ENCODE measurements at regions of chr12 and their contacts with region 1.

Region 1: DNA sequence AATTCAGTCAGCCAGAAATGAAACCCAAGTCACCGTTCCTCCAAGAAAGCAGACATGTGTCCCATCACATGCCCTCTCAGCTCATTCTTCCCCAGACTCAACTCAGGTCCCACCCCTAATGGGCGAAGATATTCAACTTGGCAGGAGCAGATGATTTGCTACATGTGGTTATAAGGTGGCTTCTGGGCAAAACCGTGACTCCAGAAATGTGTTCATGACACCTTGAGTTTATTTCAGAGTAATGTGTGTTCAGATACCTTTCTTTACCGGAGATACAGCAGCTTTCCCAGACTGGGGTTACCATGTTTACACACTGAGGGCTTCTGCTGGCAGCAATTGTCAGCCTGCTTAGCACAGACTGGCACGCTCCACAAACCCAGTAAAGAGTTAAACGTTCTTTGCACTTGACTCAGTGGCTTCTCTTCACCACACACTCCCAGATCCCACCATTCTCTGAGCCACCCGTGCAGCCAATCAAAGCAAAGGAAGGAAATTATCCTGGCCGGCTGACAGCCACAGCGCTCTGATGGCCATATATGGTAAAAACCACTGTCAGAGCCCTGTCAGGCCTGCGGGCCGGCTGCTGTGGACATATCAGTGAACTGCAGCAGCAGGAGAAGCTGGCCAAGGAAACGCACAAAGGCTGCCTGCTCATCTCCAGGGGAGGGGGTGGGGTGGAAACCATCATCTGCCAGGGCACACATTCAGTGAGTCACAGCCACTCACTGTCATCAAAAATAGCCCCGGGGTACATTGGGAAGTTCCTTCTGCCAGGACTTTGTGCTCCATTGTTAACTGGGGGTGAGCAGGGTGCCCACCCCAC is 39.9 kb downstream of the CORO1C start:
- DNase-seq: peak; percentile 98
- H3K4me3 ChIP-seq: peak overlapping the region; percentile 41
- CTCF ChIP-seq: peak; percentile 31

Region 2: DNA sequence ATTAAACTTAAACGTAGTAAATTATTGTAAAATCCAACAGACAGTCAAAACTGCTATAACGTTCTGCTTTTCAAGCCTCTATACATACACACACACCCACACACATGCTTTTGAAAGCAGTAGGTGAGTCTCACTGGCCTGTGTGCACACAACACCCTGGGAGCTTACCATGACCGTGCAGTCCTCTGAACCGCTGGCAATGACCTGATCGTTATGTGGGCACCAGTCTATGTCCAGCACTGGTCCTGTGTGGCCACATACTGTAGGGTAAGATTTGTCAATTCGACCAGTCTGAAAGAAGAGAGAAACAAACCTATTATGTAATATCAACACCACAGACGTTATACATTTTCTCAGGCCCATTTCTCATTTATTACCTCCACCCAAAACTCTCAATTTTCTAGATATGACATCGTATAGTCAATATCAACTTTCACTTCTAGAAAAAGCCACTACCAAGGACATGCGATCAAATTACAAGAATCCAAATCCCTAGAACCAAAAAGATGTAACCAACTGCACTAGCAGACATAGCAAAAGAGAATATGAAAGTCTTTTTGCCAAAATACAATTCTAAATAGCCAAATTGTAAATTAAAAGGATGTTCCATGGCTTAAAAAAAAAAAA is 13.2 kb before region 1 on chr12:
- CTCF ChIA-PET with region 1: interaction called, 11 read pairs
- POLR2A ChIA-PET with region 1: interaction called, 4 read pairs
- DNase-seq: no peak
- H3K4me3 ChIP-seq: no peak overlapping the region
- CTCF ChIP-seq: no peak

Region 3: GRCh38 chr12:108722992-108723766 is 31.8 kb after region 1 on chr12:
- CTCF ChIA-PET with region 1: interaction called, 5 read pairs
- POLR2A ChIA-PET with region 1: interaction called, 17 read pairs
- DNase-seq: peak; percentile 92
- H3K4me3 ChIP-seq: no peak overlapping the region
- CTCF ChIP-seq: no peak

Region 4: DNA sequence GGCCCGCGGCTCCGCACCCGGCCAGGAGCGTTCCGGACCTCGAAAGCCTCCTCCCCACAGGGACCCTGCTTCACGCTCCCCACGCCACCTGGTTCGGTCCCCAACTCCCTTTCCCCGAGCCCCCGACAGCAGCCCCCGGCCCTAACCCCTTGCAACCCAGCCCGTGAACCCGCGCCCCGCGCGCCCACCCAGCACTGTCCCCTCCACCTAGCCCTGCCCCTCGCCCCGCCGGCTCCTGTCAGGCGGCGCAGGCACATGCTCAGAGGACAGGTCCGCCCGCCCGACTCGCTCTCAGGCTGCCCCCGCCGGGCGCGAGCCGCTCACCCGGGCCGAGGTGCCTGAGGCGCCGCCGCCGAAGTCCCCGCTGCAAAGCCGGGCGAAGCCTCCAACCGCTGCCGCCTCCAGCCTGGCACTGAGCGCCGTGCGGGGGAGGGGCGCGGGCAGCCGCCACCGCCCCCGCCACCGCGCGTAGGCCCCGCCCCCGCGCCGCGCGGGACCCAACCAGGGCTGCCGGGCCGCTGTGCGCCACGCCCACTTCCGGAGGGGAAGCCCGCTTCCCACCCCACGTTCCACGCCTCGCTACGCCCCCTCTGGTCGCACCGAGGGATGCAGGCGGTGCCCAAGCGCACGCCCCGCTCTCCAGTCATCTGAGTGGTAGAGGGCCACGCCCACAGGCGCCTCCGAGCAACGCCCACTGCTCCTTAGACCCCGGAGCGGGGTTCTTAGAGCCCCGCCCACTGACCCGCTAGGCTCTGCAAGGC is 39.9 kb after region 1 on chr12 and contains the start of gene CORO1C:
- CTCF ChIA-PET with region 1: interaction called, 10 read pairs
- POLR2A ChIA-PET with region 1: interaction called, 10 read pairs
- DNase-seq: no peak
- H3K4me3 ChIP-seq: peak within 1 kb of the TSS; percentile 99
- CTCF ChIP-seq: peak; percentile 99

Measured in AG04449 (cell line).